K562 (cell line): ENCODE measurements at regions of chr6 and their contacts with region 1.

Region 1: DNA sequence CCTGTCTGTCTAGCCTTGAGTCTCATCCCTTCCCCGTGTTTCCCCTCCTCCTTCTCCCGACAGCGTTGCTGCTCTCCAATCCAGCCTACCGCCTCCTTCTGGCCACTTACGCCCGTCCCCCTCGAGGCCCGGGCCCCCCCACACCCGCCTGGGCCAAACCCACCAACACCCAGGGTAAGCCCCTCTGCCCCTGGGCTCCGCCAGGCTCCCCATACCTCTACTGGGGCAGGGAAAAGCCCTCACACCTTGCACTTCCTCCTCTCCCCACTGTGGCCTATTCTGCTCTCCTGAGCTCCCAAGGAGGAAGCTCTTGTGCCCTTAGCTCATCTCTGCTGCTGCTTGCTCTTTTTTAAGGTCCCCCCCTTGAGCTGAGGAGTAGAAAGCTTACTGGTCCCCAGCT is 11.0 kb downstream of the DDR1 start:
- DNase-seq: no peak
- ATAC-seq: no peak
- H3K4me3 ChIP-seq: no peak overlapping the region
- H3K27ac ChIP-seq: no peak overlapping the region
- H3K4me1 ChIP-seq: peaks cover 0 to 17% of the 10 kb centered on the region in 2 experiments; a peak in 1 of 5 replicates
- H3K27me3 ChIP-seq: no peaks in the 10 kb centered on the region
- CTCF ChIP-seq: no peak
- EP300 ChIP-seq: no peak
- POLR2A ChIP-seq: no peak
- RAD21 ChIP-seq: no peak

Region 2: DNA sequence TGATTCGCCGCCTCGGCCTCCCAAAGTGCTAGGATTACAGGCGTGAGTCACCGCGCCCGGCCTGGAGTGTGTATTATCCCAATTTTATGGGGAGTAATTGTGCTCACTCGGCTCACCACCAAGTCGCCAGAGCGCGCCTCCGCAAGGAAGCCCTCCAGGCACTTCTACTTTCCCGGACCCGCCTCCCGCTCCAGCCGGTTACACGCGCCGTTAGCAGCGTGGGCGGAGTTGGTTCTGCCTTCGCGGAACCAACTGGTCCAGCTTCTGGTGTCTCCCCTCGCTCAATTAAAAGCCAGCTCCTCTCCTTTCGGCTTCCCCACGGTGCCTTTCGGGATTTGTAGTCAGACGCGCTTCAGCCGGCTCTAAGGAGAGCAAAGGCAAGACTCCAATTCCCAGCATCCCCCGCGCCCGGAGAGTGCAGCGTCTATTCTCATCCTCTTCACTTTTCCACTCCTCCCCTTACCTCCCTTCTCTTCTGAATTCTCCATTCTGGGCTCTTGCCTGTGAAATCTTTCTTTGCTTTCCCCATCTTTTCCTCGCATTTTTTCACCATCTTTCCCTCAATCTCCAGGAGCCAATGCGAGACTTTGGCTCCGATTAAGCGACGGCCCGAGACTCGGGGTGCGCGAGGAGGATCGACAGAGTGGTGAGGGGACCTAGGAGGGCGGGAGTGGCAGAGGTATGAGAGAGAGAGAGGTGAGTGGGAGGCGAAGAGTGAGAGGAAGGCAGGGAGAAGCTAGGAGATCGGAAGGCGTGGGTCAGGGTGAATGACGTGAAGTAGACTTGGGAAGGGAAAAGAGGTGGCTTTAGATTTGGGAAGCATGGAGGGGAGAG is 12.6 kb after region 1 on chr6 and contains the start of gene GTF2H4:
- CTCF ChIA-PET with region 1: no interaction called
- POLR2A ChIA-PET with region 1: interaction called, 10 read pairs
- in situ Hi-C with region 1: no loop called
- intact Hi-C with region 1: no loop called
- DNase-seq: peak; percentile 90 to 100 (median 93)
- ATAC-seq: peak; percentile 99
- H3K4me3 ChIP-seq: peak within 1 kb of the TSS; percentile 76
- H3K27ac ChIP-seq: peak within 1 kb of the TSS; percentile 71
- H3K4me1 ChIP-seq: peaks cover 5 to 13% of the 10 kb centered on the region in 2 experiments; a peak in 4 of 5 replicates
- H3K27me3 ChIP-seq: no peaks in the 10 kb centered on the region
- CTCF ChIP-seq: no peak; a peak in 1 of 6 replicates
- EP300 ChIP-seq: peak; percentile 61
- POLR2A ChIP-seq: peak; percentile 83
- RAD21 ChIP-seq: 0 out of 4 replicates have a peak, but pooled peaks have one; percentile 8 to 12
- polyA plus RNA-seq, gene GTF2H4: 3.6 to 5.2 TPM